ENCODE measurements at regions of chr1 and their contacts with region 1.

Region 1: DNA sequence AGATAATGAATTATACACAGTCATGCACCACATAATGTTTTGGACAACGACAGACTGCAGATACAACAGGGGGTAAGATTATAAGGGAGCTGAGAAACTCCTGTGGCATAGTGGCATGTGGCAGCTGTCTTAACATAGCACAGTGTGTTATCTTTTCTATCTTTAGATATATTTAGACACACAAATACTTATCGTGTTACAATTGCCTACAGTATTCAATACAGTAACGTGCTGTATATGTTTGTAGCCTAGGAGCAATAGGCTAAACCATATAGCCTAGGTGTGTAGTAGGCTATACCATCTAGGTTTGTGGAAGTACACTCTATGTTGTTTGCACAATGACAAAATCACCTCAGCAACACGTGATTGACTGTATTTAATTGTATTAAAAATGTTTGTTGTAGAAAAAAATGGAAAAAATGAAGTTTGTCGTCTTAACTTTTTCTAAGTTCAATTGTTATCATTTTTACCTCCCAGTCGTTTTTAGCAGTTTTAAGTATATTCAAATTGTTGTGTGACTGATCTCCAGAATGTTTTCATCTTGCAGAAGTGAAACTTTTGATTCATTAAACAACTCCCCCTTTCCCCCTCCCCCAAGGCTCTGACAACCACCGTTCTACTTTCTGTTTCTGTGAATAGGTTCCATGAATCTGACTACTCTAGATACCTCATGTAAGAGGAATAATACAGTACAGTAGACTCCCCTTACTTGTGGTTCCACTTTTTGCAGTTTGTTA is 351.0 kb upstream of the B3GALT2 start:
- DNase-seq: peak; percentile 66
- H3K4me3 Mint-ChIP-seq: no peak overlapping the region
- H3K27ac Mint-ChIP-seq: peak overlapping the region; percentile 74
- H3K4me1 Mint-ChIP-seq: peaks cover 47% of the 10 kb centered on the region
- H3K27me3 Mint-ChIP-seq: no peaks in the 10 kb centered on the region

Region 2: GRCh38 chr1:193417945-193418744 is 119.3 kb before region 1 on chr1:
- intact Hi-C with region 1: loop called (anchors 2 kb)
- DNase-seq: no peak
- H3K4me3 Mint-ChIP-seq: peak overlapping the region; percentile 60
- H3K27ac Mint-ChIP-seq: peak overlapping the region; percentile 54
- H3K4me1 Mint-ChIP-seq: peaks cover 46% of the 10 kb centered on the region
- H3K27me3 Mint-ChIP-seq: no peaks in the 10 kb centered on the region

Region 3: DNA sequence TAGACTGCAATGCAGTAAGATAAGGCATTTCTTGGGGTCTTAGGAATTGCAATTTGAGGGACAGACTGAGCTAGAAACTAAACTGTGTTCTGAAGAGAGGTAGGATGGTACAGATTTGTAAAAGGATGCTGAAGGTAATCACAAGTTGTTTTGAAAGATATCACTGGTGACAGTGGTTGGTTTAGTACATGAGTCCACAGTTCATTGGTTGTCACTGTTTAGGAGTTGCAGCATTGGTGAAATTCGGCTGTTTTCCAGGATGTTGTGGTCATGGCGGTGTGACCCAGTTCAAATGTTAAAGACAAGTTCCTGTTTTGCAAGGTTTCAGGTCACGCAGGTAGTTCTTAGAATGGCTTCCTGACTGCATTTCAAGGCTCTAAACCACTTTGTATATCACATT is 58.2 kb before region 1 on chr1:
- intact Hi-C with region 1: loop called (anchors 1 kb)
- DNase-seq: peak; percentile 83
- H3K4me3 Mint-ChIP-seq: no peak overlapping the region
- H3K27ac Mint-ChIP-seq: peak overlapping the region; percentile 90
- H3K4me1 Mint-ChIP-seq: peaks cover 54% of the 10 kb centered on the region
- H3K27me3 Mint-ChIP-seq: no peaks in the 10 kb centered on the region

Region 4: GRCh38 chr1:193558491-193559028 is 21.1 kb after region 1 on chr1:
- intact Hi-C with region 1: loop called (anchors 1 kb)
- DNase-seq: no peak
- H3K4me3 Mint-ChIP-seq: no peak overlapping the region
- H3K27ac Mint-ChIP-seq: peak overlapping the region; percentile 70
- H3K4me1 Mint-ChIP-seq: peaks cover 18% of the 10 kb centered on the region
- H3K27me3 Mint-ChIP-seq: no peaks in the 10 kb centered on the region

Region 5: DNA sequence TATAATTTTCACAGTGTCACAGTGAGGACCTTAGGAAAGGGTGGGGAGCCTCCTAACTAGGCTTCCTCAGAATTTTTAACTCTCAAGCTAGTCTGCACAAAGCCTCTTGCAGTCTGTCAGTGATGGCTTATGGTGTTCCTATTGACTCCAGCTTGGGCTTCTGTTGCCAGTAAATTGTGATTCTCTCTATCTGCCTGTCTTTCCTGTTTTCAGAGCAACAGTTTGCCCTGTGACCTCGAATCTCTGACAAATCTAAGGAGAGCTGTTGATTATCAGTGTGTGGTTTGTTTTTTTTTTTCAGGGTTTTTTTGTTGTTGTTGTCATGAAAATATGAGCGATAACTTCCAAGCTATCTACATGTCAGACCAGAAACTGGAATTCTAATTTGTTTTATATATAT is 72.2 kb after region 1 on chr1:
- intact Hi-C with region 1: loop called (anchors 1 kb)
- DNase-seq: no peak
- H3K4me3 Mint-ChIP-seq: no peak overlapping the region
- H3K27ac Mint-ChIP-seq: no peak overlapping the region
- H3K4me1 Mint-ChIP-seq: peaks cover 33% of the 10 kb centered on the region
- H3K27me3 Mint-ChIP-seq: no peaks in the 10 kb centered on the region

Region 6: DNA sequence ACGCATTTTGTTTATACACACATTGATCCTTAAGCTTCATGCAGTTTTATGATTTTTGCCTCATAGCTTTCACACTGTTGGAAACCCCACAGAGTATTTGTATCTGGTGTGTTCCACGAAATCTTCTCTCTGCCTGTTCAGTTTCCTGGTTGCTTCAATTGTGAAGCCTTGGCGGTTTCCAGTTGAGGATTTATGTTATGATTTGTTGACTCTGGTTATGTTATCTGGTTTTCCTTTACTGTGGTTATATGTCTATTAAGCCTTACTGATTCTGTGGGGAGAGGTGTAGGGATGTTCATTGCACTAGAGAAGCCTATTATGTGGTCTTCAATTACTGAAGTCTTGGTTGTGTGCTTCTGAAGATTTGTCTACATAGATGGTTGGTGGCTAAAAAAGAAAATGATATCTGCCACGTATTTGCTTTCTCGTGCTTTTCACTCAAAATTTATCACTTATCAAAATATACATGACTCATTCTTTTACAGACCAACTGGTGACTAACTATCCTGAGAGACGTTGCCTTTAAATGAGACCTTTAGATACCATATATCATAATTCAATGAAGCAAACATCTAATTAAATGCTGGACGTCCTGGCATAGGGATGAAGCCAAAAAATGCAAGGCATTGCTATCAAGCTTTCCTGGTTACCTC is 137.0 kb after region 1 on chr1:
- intact Hi-C with region 1: loop called (anchors 10 kb)
- DNase-seq: no peak
- H3K4me3 Mint-ChIP-seq: no peak overlapping the region
- H3K27ac Mint-ChIP-seq: peak overlapping the region; percentile 61
- H3K4me1 Mint-ChIP-seq: peaks cover 22% of the 10 kb centered on the region
- H3K27me3 Mint-ChIP-seq: no peaks in the 10 kb centered on the region

Region 7: DNA sequence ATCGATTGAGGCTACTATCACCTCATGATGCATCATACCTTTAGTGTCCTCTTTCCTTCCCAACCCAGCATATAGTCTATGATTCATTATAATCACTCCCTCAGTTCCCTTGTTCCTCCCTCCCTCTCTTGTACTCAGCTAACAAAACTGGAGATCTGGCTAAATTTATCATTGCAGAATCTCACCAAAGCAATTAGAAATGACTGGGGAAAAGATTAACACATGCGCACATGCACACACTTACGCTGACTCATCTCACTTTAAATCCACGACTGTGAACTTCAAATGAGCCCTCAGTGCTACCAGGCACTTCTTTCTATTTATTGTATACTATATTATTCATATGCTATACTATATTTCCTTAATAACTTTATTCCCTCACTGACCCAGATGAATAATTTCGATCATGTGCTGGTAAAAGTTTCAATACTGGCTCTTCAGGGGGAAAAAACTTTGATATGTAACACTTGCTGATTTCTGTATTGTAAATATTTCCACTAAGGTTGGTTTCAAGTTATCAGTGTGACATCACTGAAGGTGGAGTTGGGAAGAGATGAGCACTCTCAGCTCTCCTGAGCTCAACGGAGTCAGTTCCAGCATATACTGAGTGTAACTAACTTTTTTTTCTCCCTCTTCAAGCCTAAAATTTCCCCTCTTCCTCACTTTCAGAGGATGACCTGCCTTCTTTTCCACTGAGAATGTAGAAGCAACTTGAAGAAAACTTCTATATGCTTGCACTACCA is 262.7 kb after region 1 on chr1:
- intact Hi-C with region 1: loop called (anchors 10 kb)
- DNase-seq: no peak
- H3K4me3 Mint-ChIP-seq: no peak overlapping the region
- H3K27ac Mint-ChIP-seq: peak overlapping the region; percentile 5
- H3K4me1 Mint-ChIP-seq: peaks cover 13% of the 10 kb centered on the region
- H3K27me3 Mint-ChIP-seq: no peaks in the 10 kb centered on the region

Measured in activated T-helper 2 cell treated with anti-CD3 and anti-CD28 coated beads, Interferon-gamma antibody, Interleukin-2, Interleukin-4, amounts not matched to agents 10 μg/mL and 5 μg/mL and 100 μg/mL, durations not matched to agents 14 hours and 24 hours and 36 hours (primary cell).